CD4-positive, alpha-beta memory T cell (primary cell): ENCODE measurements at regions of chr1 and their contacts with region 1.

Region 1: DNA sequence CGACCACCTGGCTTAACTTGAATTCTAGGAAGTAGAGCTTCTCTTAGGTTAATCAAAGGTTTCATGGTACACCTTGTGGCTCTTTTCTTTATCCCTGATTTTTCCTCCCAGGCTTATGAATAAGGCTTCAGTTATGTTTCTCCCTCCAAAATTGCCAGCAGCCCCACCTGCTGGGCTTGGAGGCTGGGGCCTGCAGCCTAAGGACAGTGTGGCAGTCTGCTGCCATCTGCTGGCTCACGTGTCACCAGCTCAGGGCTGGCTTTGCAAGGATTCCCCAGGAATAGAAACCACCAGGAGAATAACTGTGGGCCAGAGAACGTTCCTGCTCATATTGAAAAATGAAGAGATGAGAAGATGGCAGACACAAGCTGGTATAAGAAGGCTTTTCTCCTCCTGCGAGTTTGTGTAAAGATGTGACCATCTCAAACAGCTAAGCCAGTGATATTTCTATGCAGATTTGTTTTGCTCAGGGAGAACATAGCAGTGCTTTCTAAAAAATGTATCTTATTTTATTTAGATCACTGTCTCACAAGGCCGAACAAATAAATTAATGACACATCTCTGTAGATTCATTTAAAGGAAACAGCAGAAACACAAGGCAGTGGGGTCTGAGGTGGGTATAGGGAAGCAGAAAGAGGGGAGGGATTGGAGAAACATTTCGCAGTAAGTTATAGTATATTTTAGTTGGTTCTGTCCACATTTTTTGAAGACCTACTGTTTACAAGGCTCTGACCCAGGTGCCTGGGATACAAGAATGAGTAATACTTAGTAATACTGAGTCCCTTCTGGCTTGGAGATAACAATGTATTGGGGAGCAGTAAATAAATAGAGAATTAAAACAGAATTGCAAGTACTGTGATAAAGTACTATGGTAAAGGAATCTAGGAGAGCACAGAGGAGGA is 291.1 kb upstream of the SGIP1 start:
- DNase-seq: peak; percentile 63 to 72 (median 65)
- H3K4me3 ChIP-seq: no peak overlapping the region
- H3K4me3 Mint-ChIP-seq: no peak overlapping the region
- H3K27ac ChIP-seq: no peak overlapping the region
- H3K27ac Mint-ChIP-seq: no peak overlapping the region
- H3K4me1 ChIP-seq: peaks cover 50% of the 10 kb centered on the region
- H3K4me1 Mint-ChIP-seq: peaks cover 0 to 28% (median 22%) of the 10 kb centered on the region in 4 donors
- H3K27me3 ChIP-seq: no peaks in the 10 kb centered on the region
- H3K27me3 Mint-ChIP-seq: peaks cover 6 to 8% of the 10 kb centered on the region in 2 donors

Region 2: GRCh38 chr1:65419681-65420589 is 823.0 kb before region 1 on chr1:
- CTCF ChIA-PET with region 1: no interaction called
- POLR2A ChIA-PET with region 1: no interaction called
- intact Hi-C with region 1: loop called (anchors 10 kb)
- DNase-seq: peak; percentile 97 to 99 (median 98)
- H3K4me3 ChIP-seq: peak overlapping the region; percentile 76 to 79
- H3K4me3 Mint-ChIP-seq: peak overlapping the region in 1 of 8 donors; percentile 94
- H3K27ac ChIP-seq: peak overlapping the region; percentile 82
- H3K27ac Mint-ChIP-seq: peak overlapping the region in 5 of 7 donors; percentile 91 to 96 (median 96)
- H3K4me1 ChIP-seq: peaks cover 38% of the 10 kb centered on the region
- H3K4me1 Mint-ChIP-seq: peaks cover 10 to 27% (median 17%) of the 10 kb centered on the region in 4 donors
- H3K27me3 ChIP-seq: no peaks in the 10 kb centered on the region
- H3K27me3 Mint-ChIP-seq: peaks cover 0 to 2% of the 10 kb centered on the region in 2 donors

Region 3: DNA sequence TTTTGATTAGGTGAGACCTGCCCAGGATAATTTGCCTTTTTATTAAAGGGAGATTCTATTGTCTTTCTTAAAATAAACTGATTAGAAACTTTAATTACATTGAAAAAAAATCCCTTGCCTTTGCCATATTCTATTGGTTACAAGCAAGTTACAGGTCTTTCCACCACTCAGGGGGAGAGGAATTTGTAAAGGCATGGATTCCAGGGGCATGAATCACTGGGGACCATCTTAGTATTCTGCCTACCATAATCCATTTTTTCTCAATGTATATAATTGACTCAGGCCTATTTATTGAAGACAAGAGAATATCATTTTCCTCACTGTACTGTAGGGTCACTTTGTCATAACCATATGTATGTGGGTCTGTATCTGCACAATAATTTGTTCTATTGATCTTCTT is 574.5 kb before region 1 on chr1:
- CTCF ChIA-PET with region 1: no interaction called
- POLR2A ChIA-PET with region 1: no interaction called
- intact Hi-C with region 1: no loop called
- DNase-seq: no peak
- H3K4me3 ChIP-seq: no peak overlapping the region
- H3K4me3 Mint-ChIP-seq: no peak overlapping the region
- H3K27ac ChIP-seq: no peak overlapping the region
- H3K27ac Mint-ChIP-seq: no peak overlapping the region
- H3K4me1 ChIP-seq: no peaks in the 10 kb centered on the region
- H3K4me1 Mint-ChIP-seq: no peaks in the 10 kb centered on the region
- H3K27me3 ChIP-seq: peaks cover 3% of the 10 kb centered on the region
- H3K27me3 Mint-ChIP-seq: peaks cover 10 to 18% of the 10 kb centered on the region in 2 donors

Region 4: DNA sequence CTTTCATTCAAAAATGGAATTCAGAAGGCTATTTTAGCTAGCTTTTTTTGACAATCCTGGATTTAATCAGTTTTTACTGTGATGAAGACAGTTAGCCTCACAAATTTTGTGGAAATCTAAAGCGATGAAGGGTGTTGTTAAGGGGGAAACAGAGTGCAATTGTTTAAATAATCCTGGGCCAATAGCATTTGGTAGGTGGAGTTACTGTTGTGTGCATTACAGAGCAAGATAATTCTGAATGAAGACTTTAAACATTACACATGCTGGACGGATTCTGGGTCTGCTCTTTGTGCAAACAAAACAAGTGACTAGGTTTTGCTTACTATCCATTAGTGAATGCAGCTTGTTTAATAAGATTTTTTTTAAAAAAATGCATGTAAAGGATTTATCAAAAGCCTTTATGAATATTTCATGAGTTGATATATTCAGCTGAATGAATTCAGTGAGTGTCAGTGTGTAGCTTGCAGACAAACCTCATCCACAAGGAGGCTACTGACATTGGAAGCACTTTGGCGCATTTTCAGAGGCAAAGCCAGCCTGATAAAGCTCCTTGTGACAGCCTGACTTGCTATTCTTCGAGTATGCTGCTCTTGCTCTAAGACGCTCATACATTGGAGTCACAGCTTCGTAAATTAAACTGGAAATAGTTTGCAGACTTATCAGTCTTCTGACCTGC is 250.6 kb before region 1 on chr1:
- CTCF ChIA-PET with region 1: interaction called, 15 read pairs
- POLR2A ChIA-PET with region 1: no interaction called
- intact Hi-C with region 1: no loop called
- DNase-seq: no peak
- H3K4me3 ChIP-seq: no peak overlapping the region
- H3K4me3 Mint-ChIP-seq: no peak overlapping the region
- H3K27ac ChIP-seq: no peak overlapping the region
- H3K27ac Mint-ChIP-seq: no peak overlapping the region
- H3K4me1 ChIP-seq: no peaks in the 10 kb centered on the region
- H3K4me1 Mint-ChIP-seq: peaks cover 0 to 2% (median 0%) of the 10 kb centered on the region in 4 donors
- H3K27me3 ChIP-seq: no peaks in the 10 kb centered on the region
- H3K27me3 Mint-ChIP-seq: peaks cover 5 to 8% of the 10 kb centered on the region in 2 donors

Region 5: GRCh38 chr1:66253330-66253921 is 10.5 kb after region 1 on chr1:
- CTCF ChIA-PET with region 1: interaction called, 69 read pairs
- POLR2A ChIA-PET with region 1: interaction called, 4 read pairs
- intact Hi-C with region 1: no loop called
- DNase-seq: peak in 4 of 5 donors; percentile 45 to 55 (median 50)
- H3K4me3 ChIP-seq: no peak overlapping the region
- H3K4me3 Mint-ChIP-seq: no peak overlapping the region
- H3K27ac ChIP-seq: no peak overlapping the region
- H3K27ac Mint-ChIP-seq: peak overlapping the region in 1 of 7 donors; percentile 57
- H3K4me1 ChIP-seq: peaks cover 26% of the 10 kb centered on the region
- H3K4me1 Mint-ChIP-seq: peaks cover 5 to 24% (median 16%) of the 10 kb centered on the region in 4 donors
- H3K27me3 ChIP-seq: no peaks in the 10 kb centered on the region
- H3K27me3 Mint-ChIP-seq: peaks cover 0 to 2% of the 10 kb centered on the region in 2 donors

Region 6: DNA sequence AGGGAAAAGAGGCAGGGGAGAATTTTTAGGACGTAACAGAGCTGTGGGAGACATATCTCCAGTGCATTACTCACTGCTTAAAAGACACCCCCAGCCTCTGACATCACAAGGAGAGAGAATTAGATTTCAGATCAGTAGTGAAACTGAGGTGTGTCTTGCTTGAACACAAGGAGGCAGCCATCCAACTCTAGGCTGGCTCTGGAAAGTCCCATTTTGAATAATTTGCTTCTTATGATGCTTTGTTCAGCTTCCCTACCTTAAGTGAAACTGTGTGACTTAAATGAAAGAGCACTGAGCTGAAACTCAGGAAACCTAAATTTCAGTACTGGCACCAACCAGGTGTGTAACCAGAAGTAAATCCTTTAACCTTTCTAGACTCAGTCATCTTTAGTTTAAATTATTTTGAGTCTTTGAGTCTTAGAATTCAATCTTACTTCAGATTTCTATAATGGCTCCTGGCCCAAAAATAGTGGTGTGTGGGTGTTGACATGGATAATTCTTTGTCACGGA is 39.5 kb after region 1 on chr1:
- CTCF ChIA-PET with region 1: interaction called, 13 read pairs
- POLR2A ChIA-PET with region 1: interaction called, 3 read pairs
- intact Hi-C with region 1: no loop called
- DNase-seq: peak; percentile 71 to 89 (median 79)
- H3K4me3 ChIP-seq: no peak overlapping the region
- H3K4me3 Mint-ChIP-seq: peak overlapping the region in 4 of 8 donors; percentile 12 to 67 (median 42)
- H3K27ac ChIP-seq: peak overlapping the region; percentile 57
- H3K27ac Mint-ChIP-seq: peak overlapping the region; percentile 93 to 97 (median 95)
- H3K4me1 ChIP-seq: peaks cover 90% of the 10 kb centered on the region
- H3K4me1 Mint-ChIP-seq: peaks cover 70 to 93% (median 83%) of the 10 kb centered on the region in 4 donors
- H3K27me3 ChIP-seq: no peaks in the 10 kb centered on the region
- H3K27me3 Mint-ChIP-seq: peaks cover 0 to 3% of the 10 kb centered on the region in 2 donors

Region 7: GRCh38 chr1:66374561-66375111 is 131.7 kb after region 1 on chr1:
- CTCF ChIA-PET with region 1: interaction called, 10 read pairs
- POLR2A ChIA-PET with region 1: interaction called, 8 read pairs
- intact Hi-C with region 1: no loop called
- DNase-seq: peak; percentile 51 to 66 (median 54)
- H3K4me3 ChIP-seq: no peak overlapping the region
- H3K4me3 Mint-ChIP-seq: peak overlapping the region; percentile 47 to 86 (median 68)
- H3K27ac ChIP-seq: peak overlapping the region; percentile 58
- H3K27ac Mint-ChIP-seq: peak overlapping the region; percentile 81 to 99 (median 93)
- H3K4me1 ChIP-seq: peaks cover 69% of the 10 kb centered on the region
- H3K4me1 Mint-ChIP-seq: peaks cover 58 to 72% (median 65%) of the 10 kb centered on the region in 4 donors
- H3K27me3 ChIP-seq: no peaks in the 10 kb centered on the region
- H3K27me3 Mint-ChIP-seq: no peaks in the 10 kb centered on the region